ENCODE measurements at regions of chr1 and their contacts with region 1.

Region 1: DNA sequence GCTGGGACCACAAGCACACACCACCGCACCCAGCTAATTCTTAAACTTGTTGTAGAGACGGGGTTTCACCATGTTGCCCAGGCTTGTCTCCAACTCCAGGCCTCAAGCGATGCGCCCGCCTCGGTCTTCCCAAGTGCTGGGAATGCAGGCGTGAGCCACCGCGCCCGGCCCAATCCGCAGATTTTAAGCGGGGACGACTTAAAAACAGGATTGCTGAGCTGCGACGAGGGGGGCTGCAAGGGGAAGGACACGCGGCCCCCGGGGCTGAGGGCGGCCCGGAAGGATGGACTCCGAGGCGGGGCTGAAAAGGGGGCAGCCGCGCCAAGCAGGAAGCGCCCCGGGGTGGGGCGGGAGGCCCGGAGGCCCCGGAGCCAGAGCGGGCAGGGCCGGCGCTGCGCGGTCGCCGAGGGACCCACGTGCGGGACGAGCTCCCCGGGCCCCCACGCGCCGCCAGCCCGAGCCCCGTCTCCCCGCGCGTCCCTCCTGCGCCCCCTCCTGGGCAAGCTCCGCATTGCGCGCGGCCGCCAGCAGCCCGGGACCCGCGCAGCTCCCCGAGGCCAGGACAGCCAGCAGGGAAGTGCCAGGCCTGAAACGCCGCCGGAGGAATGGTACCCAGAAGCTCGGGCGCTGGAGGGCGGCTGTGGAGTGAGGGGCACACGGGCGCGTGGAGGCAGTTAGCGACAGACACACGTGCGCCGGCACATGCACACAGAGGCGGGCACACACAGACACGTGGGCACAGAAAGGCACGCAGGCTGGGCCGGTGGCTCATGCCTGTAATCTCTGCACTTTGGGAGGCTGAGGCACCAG is 5.5 kb upstream of the PRKCZ start:
- DNase-seq: peak in 1 of 2 experiments; percentile 92
- H3K4me3 ChIP-seq: peak overlapping the region in 2 of 4 experiments; percentile 2 to 52; a peak in 3 of 8 replicates
- H3K27ac ChIP-seq: no peak overlapping the region
- H3K4me1 ChIP-seq: peaks cover 0 to 26% (median 19%) of the 10 kb centered on the region in 4 experiments; a peak in 6 of 7 replicates
- H3K27me3 ChIP-seq: peaks cover 0 to 7% (median 0%) of the 10 kb centered on the region in 4 experiments; a peak in 3 of 7 replicates
- CTCF ChIP-seq: peak in 2 of 3 experiments; percentile 77 to 90; a peak in 3 of 4 replicates
- EP300 ChIP-seq: no peak
- POLR2A ChIP-seq: no peak
- RAD21 ChIP-seq: peak; percentile 58 to 80

Region 2: GRCh38 chr1:1943834-1944570 is 100.7 kb before region 1 on chr1:
- CTCF ChIA-PET with region 1: interaction called, 145 read pairs
- POLR2A ChIA-PET with region 1: interaction called, 3 read pairs
- DNase-seq: peak in 1 of 2 experiments; percentile 91
- H3K4me3 ChIP-seq: peak overlapping the region in 3 of 4 experiments; percentile 28 to 46 (median 42); a peak in 5 of 8 replicates
- H3K27ac ChIP-seq: no peak overlapping the region
- H3K4me1 ChIP-seq: peaks cover 0 to 2% (median 0%) of the 10 kb centered on the region in 4 experiments; a peak in 2 of 7 replicates
- H3K27me3 ChIP-seq: no peaks in the 10 kb centered on the region
- CTCF ChIP-seq: peak in 2 of 3 experiments; percentile 70 to 88; a peak in 3 of 4 replicates
- EP300 ChIP-seq: no peak
- POLR2A ChIP-seq: no peak
- RAD21 ChIP-seq: peak; percentile 46 to 57

Region 3: DNA sequence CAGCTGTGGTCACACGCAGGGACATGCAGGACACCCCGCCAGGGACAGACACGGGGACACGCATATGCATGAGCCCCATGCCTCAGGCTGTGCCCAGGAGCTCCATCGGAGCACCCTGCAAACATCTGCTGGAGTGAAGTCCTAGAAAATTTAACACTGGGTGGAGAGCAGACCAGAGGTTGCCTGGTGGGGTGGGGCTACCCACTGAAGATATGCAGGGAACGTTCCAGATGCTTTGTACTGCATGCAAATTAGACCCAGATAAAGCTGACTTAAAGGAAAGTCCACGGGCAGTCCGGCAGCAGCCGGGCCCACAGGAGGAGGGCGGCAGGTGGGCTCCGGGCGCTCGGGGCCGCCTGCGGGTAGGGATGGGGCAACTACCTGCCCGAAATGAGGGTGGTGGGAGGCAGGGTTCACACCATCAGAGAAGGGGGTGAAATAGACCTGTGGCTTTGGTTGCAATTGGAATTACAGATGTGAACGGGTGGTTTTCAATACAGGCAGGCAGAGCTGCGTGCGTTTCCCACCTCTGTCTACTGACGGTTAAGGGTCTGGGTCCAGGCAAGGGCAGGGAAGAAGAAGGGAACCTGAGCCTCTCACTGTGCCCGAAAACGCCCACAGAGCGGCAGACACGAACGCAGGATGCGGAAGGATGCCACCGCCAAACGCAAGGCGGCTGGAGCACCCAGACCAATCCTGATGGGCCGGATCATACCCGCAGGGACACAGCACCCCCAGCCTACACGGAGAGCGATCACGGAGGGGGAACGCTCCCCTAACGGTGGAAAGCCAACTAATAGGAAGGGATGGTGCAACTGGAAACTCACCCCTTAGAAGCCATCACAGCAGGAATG is 62.1 kb before region 1 on chr1:
- CTCF ChIA-PET with region 1: interaction called, 24 read pairs
- POLR2A ChIA-PET with region 1: interaction called, 4 read pairs
- DNase-seq: no peak
- H3K4me3 ChIP-seq: no peak overlapping the region
- H3K27ac ChIP-seq: no peak overlapping the region
- H3K4me1 ChIP-seq: peaks cover 0 to 3% (median 0%) of the 10 kb centered on the region in 4 experiments; a peak in 2 of 7 replicates
- H3K27me3 ChIP-seq: no peaks in the 10 kb centered on the region
- CTCF ChIP-seq: no peak
- EP300 ChIP-seq: no peak
- POLR2A ChIP-seq: no peak
- RAD21 ChIP-seq: no peak

Region 4: DNA sequence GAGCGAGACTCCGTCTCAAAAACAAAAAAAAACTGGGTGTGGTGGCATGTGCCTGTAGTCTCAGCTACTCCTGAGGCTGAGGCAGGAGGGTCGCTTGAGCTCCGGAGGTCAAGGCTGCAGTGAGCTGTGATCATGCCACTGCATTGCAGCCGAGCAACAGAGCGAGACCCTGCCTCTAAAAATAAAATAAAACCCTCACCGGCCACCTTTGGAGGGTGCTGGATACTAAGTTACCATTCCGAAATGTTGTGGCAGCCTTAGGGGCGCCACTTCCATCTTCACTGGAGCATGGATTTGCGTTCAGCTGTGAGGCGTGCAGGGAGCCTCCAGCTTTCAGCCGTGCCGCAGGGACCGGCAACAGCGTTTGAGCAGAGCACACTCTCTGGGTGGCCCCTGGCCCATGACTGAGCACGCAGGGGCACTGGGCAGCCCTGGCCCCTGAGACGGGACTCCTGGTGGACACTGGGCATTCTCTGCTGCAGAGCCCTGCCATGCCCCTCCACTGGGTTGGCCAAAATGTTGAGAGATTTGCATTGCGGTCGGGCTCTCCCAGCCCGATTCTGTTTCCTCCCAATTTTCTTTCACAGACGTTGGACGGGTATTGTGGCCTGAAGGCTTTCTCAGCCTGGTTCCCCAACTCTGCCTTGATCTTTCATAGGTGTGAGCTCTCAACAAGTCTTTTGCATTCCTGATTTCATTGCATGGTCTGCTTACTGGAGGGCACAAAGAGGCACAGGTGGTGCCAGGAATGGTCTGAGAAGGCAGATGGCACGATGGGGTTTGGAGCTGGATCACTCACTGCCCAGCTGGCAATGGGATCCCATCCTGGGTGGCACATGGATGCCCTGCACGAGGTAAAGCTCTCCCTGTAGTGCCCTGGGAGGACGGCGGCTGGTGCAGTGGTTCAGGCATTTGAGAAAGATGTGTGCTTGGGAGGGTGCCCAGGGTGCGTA is 35.3 kb before region 1 on chr1:
- CTCF ChIA-PET with region 1: interaction called, 15 read pairs
- POLR2A ChIA-PET with region 1: no interaction called
- DNase-seq: no peak
- H3K4me3 ChIP-seq: no peak overlapping the region
- H3K27ac ChIP-seq: no peak overlapping the region
- H3K4me1 ChIP-seq: no peaks in the 10 kb centered on the region; a peak in 1 of 7 replicates
- H3K27me3 ChIP-seq: no peaks in the 10 kb centered on the region
- CTCF ChIP-seq: no peak
- EP300 ChIP-seq: no peak
- POLR2A ChIP-seq: no peak
- RAD21 ChIP-seq: no peak

Region 5: GRCh38 chr1:2055911-2056575 is 11.3 kb after region 1 on chr1:
- CTCF ChIA-PET with region 1: interaction called, 15 read pairs
- POLR2A ChIA-PET with region 1: interaction called, 6 read pairs
- DNase-seq: no peak
- H3K4me3 ChIP-seq: no peak overlapping the region
- H3K27ac ChIP-seq: no peak overlapping the region
- H3K4me1 ChIP-seq: peaks cover 0 to 2% (median 1%) of the 10 kb centered on the region in 4 experiments; a peak in 3 of 7 replicates
- H3K27me3 ChIP-seq: no peaks in the 10 kb centered on the region
- CTCF ChIP-seq: peak in 2 of 3 experiments; percentile 20 to 47; a peak in 2 of 4 replicates
- EP300 ChIP-seq: no peak
- POLR2A ChIP-seq: no peak
- RAD21 ChIP-seq: no peak

Measured in H1 (cell line).